Activated naive CD4-positive, alpha-beta T cell treated with anti-CD3 and anti-CD28 coated beads, Interleukin-2, amount 10 ng/mL, durations not matched to agents 7 days and 5 days (primary cell): ENCODE measurements at regions of chr6 and their contacts with region 1.

Region 1: GRCh38 chr6:8102122-8102958 is at the start of gene EEF1E1:
- DNase-seq: peak; percentile 97
- H3K4me3 Mint-ChIP-seq: peak within 1 kb of the TSS; percentile 98
- H3K27ac Mint-ChIP-seq: peak within 1 kb of the TSS; percentile 94
- H3K4me1 Mint-ChIP-seq: peaks cover 36% of the 10 kb centered on the region
- H3K27me3 Mint-ChIP-seq: peaks cover 10% of the 10 kb centered on the region

Region 2: GRCh38 chr6:8065519-8065911 is 36.8 kb before region 1 on chr6:
- CTCF ChIA-PET with region 1: interaction called, 11 read pairs
- DNase-seq: no peak
- H3K4me3 Mint-ChIP-seq: no peak overlapping the region
- H3K27ac Mint-ChIP-seq: peak overlapping the region; percentile 89
- H3K4me1 Mint-ChIP-seq: peaks cover 35% of the 10 kb centered on the region
- H3K27me3 Mint-ChIP-seq: peaks cover 4% of the 10 kb centered on the region

Region 3: DNA sequence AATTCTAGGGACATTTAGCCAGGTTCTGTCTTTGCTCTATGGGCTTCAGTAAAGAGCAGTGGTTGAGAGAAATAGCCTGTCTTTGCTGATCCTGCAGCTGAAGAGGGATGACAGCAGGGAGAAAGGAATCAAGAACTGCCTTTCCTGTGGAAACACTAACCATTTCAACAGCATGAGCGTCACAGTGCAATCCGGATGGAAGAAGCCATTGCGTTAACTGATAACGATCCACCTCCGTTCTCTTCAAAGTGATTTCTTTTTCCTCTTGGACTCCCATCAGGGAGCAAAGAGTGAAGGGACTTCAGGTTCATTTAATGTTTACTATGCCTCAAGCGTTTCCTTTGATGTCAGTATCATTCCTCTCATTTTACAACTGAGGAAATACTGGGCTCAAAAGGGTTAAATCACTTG is 35.2 kb after region 1 on chr6:
- CTCF ChIA-PET with region 1: no interaction called
- DNase-seq: no peak
- H3K4me3 Mint-ChIP-seq: no peak overlapping the region
- H3K27ac Mint-ChIP-seq: no peak overlapping the region
- H3K4me1 Mint-ChIP-seq: no peaks in the 10 kb centered on the region
- H3K27me3 Mint-ChIP-seq: peaks cover 8% of the 10 kb centered on the region